Endothelial cell of umbilical vein (primary cell): ENCODE measurements at regions of chr6 and their contacts with region 1.

Region 1: GRCh38 chr6:73653571-73654424 is at the start of gene SLC17A5:
- DNase-seq: peak; percentile 95
- H3K4me3 ChIP-seq: peak within 1 kb of the TSS; percentile 58 to 92 (median 84)
- H3K27ac ChIP-seq: peak within 1 kb of the TSS; percentile 61
- H3K4me1 ChIP-seq: peaks cover 14% of the 10 kb centered on the region
- H3K27me3 ChIP-seq: no peaks in the 10 kb centered on the region
- CTCF ChIP-seq: no peak
- POLR2A ChIP-seq: peak; percentile 90
- total RNA-seq, gene SLC17A5: 15.2 and 17.6 TPM in 2 replicates

Region 2: DNA sequence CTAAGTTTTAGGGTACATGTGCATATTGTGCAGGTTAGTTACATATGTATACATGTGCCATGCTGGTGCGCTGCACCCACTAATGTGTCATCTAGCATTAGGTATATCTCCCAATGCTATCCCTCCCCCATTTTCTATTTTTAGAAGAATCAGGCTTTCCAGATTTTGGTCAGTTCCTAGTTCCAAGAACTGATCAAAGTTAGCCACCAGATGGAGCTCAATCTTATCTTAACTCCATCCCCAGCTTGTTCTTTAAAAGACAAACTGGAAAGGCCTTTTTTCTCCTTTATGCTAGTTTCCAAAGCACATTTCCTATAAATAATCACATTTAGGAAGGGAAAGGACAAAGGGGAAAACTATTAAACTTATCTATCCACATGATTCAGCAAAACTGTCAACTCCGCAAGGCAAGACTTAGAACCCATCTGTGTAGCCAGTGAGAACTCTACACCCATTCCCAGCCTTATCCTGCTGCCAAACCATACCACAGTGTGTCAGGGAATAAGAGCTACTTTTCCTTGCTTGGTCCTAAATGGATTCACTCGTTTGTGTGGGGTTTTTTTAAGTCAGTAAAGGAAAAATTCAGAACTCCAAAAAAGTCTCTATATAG is 368.0 kb before region 1 on chr6:
- CTCF ChIA-PET with region 1: interaction called, 17 read pairs
- POLR2A ChIA-PET with region 1: no interaction called
- dilution Hi-C with region 1: no loop called
- intact Hi-C with region 1: loop called (anchors 10 kb)
- DNase-seq: peak; percentile 60
- H3K4me3 ChIP-seq: no peak overlapping the region
- H3K27ac ChIP-seq: no peak overlapping the region
- H3K4me1 ChIP-seq: peaks cover 16% of the 10 kb centered on the region
- H3K27me3 ChIP-seq: no peaks in the 10 kb centered on the region
- CTCF ChIP-seq: peak; percentile 19 to 34
- POLR2A ChIP-seq: no peak

Region 3: DNA sequence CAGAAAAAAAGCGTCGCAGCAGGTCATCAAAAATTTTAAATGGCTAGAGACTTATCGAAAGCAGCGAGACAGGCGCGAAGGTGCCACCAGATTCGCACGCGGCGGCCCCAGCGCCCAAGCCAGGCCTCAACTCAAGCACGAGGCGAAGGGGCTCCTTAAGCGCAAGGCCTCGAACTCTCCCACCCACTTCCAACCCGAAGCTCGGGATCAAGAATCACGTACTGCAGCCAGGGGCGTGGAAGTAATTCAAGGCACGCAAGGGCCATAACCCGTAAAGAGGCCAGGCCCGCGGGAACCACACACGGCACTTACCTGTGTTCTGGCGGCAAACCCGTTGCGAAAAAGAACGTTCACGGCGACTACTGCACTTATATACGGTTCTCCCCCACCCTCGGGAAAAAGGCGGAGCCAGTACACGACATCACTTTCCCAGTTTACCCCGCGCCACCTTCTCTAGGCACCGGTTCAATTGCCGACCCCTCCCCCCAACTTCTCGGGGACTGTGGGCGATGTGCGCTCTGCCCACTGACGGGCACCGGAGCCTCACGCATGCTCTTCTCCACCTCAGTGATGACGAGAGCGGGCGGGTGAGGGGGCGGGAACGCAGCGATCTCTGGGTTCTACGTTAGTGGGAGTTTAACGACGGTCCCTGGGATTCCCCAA is 133.0 kb before region 1 on chr6 and contains the start of gene EEF1A1:
- CTCF ChIA-PET with region 1: interaction called, 14 read pairs
- POLR2A ChIA-PET with region 1: interaction called, 29 read pairs
- dilution Hi-C with region 1: no loop called
- intact Hi-C with region 1: loop called (anchors 1 kb)
- DNase-seq: peak; percentile 100
- H3K4me3 ChIP-seq: peak within 1 kb of the TSS; percentile 85 to 99 (median 95)
- H3K27ac ChIP-seq: peak within 1 kb of the TSS; percentile 100
- H3K4me1 ChIP-seq: peaks cover 34% of the 10 kb centered on the region
- H3K27me3 ChIP-seq: no peaks in the 10 kb centered on the region
- CTCF ChIP-seq: no peak
- POLR2A ChIP-seq: peak; percentile 100
- total RNA-seq, gene EEF1A1: 9,186 and 9,456 TPM in 2 replicates

Region 4: DNA sequence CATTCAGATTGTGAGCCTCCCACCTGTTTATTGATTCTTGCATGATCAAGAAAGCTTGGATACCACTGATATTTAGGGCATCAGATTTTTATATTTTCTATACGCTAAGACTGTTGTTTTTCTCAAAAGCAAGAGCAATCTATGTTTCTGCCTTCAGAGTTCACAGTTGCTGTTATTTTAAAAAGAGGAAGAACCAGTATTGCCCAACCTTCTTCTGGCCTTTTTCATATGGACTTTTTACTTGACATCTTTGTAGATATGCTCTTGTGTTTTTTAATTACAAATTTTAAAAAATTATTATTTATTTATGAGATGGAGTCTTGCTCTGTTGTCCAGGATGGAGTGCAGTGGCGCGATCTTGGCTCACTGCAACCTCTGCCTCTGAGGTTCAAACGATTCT is 28.9 kb before region 1 on chr6:
- CTCF ChIA-PET with region 1: interaction called, 4 read pairs
- POLR2A ChIA-PET with region 1: no interaction called
- dilution Hi-C with region 1: no loop called
- intact Hi-C with region 1: loop called (anchors 1 kb)
- DNase-seq: no peak
- H3K4me3 ChIP-seq: no peak overlapping the region
- H3K27ac ChIP-seq: no peak overlapping the region
- H3K4me1 ChIP-seq: no peaks in the 10 kb centered on the region
- H3K27me3 ChIP-seq: no peaks in the 10 kb centered on the region
- CTCF ChIP-seq: no peak
- POLR2A ChIP-seq: no peak

Region 5: GRCh38 chr6:73695619-73696421 is 42.0 kb after region 1 on chr6 and contains the start of gene CD109:
- CTCF ChIA-PET with region 1: interaction called, 6 read pairs
- POLR2A ChIA-PET with region 1: interaction called, 5 read pairs
- dilution Hi-C with region 1: no loop called
- intact Hi-C with region 1: loop called (anchors 1 kb)
- DNase-seq: peak; percentile 94
- H3K4me3 ChIP-seq: peak within 1 kb of the TSS; percentile 40 to 88 (median 63)
- H3K27ac ChIP-seq: peak within 1 kb of the TSS; percentile 93
- H3K4me1 ChIP-seq: peaks cover 43% of the 10 kb centered on the region
- H3K27me3 ChIP-seq: no peaks in the 10 kb centered on the region
- CTCF ChIP-seq: no peak
- POLR2A ChIP-seq: peak; percentile 70
- total RNA-seq, gene CD109: 86.2 and 107 TPM in 2 replicates

Region 6: GRCh38 chr6:73732845-73733675 is 79.3 kb after region 1 on chr6:
- CTCF ChIA-PET with region 1: interaction called, 38 read pairs
- POLR2A ChIA-PET with region 1: no interaction called
- dilution Hi-C with region 1: no loop called
- intact Hi-C with region 1: no loop called
- DNase-seq: peak; percentile 78
- H3K4me3 ChIP-seq: no peak overlapping the region
- H3K27ac ChIP-seq: no peak overlapping the region
- H3K4me1 ChIP-seq: no peaks in the 10 kb centered on the region
- H3K27me3 ChIP-seq: no peaks in the 10 kb centered on the region
- CTCF ChIP-seq: peak; percentile 91 to 93
- POLR2A ChIP-seq: no peak

Region 7: DNA sequence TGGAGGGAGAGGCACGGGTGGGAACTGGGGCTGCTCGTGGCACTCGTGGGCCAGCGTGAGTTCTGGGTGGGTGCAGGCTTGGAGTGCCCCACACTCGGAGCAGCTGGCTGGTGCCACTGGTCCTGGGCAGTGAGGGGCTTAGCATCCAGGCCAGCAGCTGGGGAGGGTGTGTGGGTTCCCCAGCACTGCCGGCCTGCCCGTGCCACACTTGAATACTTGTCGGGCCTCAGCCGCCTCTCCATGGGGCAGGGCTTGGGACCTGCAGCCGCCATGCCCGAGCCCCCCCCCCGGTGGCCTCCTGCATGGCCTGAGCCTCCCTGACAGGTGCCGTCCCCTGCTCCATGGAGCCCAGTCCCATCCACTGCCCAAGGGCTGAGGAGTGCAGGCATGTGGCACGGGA is 249.4 kb after region 1 on chr6:
- CTCF ChIA-PET with region 1: no interaction called
- POLR2A ChIA-PET with region 1: no interaction called
- dilution Hi-C with region 1: no loop called
- intact Hi-C with region 1: no loop called
- DNase-seq: no peak
- H3K4me3 ChIP-seq: no peak overlapping the region
- H3K27ac ChIP-seq: no peak overlapping the region
- H3K4me1 ChIP-seq: no peaks in the 10 kb centered on the region
- H3K27me3 ChIP-seq: peaks cover 2 to 3% of the 10 kb centered on the region in 2 experiments
- CTCF ChIP-seq: no peak
- POLR2A ChIP-seq: no peak